ENCODE measurements at regions of chr19 and their contacts with region 1.

Region 1: DNA sequence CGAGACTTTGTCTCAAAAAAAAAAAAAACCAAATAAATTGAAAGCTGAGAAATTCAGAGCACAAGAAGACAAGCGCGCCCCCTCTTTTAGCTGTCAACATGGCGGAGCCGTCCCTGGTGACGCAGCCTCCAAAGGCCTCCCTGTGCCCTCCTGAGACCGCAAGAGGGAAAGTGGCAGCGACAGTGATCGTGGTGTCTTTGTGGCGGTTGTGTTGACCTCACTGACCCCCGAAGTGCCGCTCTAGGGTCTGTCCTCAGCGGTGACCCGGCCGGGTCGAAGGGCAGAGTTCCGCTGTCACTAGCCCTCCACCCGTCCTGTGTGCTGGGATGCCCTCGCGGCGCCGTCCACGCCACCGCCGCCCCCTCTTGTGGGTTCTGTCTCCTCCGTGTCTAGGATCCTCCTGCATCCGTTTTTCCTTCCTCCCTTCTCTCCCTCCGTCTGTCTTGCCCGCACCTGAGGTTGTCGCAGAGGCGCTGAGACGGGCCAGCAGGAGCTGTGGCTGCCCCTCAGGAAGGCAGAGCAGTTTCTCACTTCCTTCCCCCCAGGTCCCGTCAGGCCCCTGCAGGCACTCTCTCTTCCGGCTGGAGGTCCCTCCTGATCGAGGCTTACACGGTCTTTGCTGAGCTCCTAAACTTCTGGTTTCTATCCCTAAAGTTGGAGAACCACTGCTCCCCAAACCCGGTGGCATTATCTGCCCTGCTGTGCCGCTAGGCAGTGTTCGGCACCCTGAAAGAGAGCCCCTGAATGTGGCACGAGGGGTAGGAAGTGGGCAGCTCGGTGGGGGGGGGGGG is 7.2 kb downstream of the UHRF1 start:
- DNase-seq: no peak
- ATAC-seq: no peak
- H3K4me3 ChIP-seq: no peak overlapping the region
- H3K27ac ChIP-seq: no peak overlapping the region
- H3K4me1 ChIP-seq: peaks cover 24% of the 10 kb centered on the region
- H3K27me3 ChIP-seq: no peaks in the 10 kb centered on the region
- CTCF ChIP-seq: no peak

Region 2: DNA sequence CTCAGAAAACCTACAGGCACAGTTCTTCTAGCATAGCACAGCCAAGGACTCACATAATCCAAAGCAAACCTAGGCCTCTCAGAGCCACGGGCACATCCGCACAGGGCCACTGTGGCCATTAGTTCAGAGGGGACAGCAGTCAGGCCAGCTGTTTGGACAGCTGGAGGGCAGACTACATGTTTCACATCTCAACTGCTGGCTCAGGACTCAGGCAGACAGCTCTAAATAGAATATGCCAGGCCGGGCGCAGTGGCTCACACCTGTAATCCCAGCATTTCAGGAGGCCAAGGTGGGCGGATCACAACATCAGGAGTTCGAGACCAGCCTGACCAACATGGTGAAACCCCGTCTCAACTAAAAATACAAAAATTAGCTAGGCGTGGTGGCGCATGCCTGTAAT is 679.3 kb after region 1 on chr19:
- CTCF ChIA-PET with region 1: no interaction called
- POLR2A ChIA-PET with region 1: interaction called, 10 read pairs
- in situ Hi-C with region 1: no loop called
- intact Hi-C with region 1: no loop called
- DNase-seq: no peak
- ATAC-seq: no peak
- H3K4me3 ChIP-seq: no peak overlapping the region
- H3K27ac ChIP-seq: no peak overlapping the region
- H3K4me1 ChIP-seq: no peaks in the 10 kb centered on the region
- H3K27me3 ChIP-seq: no peaks in the 10 kb centered on the region
- CTCF ChIP-seq: no peak

Measured in Panc1 (cell line).